ENCODE measurements at regions of chr12 and their contacts with region 1.

Region 1: GRCh38 chr12:27383429-27384260 is 51.0 kb downstream of the BMAL2 start:
- DNase-seq: peak; percentile 77
- H3K4me3 Mint-ChIP-seq: no peak overlapping the region
- H3K27ac Mint-ChIP-seq: no peak overlapping the region
- H3K4me1 Mint-ChIP-seq: no peaks in the 10 kb centered on the region
- H3K27me3 Mint-ChIP-seq: no peaks in the 10 kb centered on the region

Region 2: DNA sequence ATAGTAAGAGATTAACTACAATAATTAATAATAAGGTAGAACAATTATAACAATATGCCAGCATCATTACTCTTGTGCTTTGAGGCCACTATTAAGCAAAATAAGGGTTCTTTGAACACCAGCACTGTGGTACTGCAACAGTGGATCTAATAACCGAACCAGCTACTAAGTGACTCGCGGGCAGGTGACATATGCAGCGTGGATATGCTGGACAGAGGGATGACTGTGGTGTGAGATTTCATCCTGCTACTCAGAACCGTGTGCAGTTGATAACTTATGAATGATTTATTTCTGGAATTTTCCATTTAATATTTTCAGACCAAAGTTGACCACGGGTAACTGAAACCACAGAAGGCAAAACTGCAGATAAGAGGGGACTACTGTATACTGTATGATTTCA is 16.6 kb before region 1 on chr12:
- CTCF ChIA-PET with region 1: interaction called, 15 read pairs
- DNase-seq: no peak
- H3K4me3 Mint-ChIP-seq: no peak overlapping the region
- H3K27ac Mint-ChIP-seq: no peak overlapping the region
- H3K4me1 Mint-ChIP-seq: no peaks in the 10 kb centered on the region
- H3K27me3 Mint-ChIP-seq: peaks cover 7% of the 10 kb centered on the region

Region 3: GRCh38 chr12:27394676-27395075 is 11.0 kb after region 1 on chr12:
- CTCF ChIA-PET with region 1: interaction called, 10 read pairs
- DNase-seq: no peak
- H3K4me3 Mint-ChIP-seq: no peak overlapping the region
- H3K27ac Mint-ChIP-seq: no peak overlapping the region
- H3K4me1 Mint-ChIP-seq: no peaks in the 10 kb centered on the region
- H3K27me3 Mint-ChIP-seq: no peaks in the 10 kb centered on the region

Region 4: GRCh38 chr12:27751386-27752047 is 367.9 kb after region 1 on chr12:
- CTCF ChIA-PET with region 1: no interaction called
- DNase-seq: no peak
- H3K4me3 Mint-ChIP-seq: no peak overlapping the region
- H3K27ac Mint-ChIP-seq: no peak overlapping the region
- H3K4me1 Mint-ChIP-seq: no peaks in the 10 kb centered on the region
- H3K27me3 Mint-ChIP-seq: no peaks in the 10 kb centered on the region